Naive thymus-derived CD4-positive, alpha-beta T cell (primary cell): ENCODE measurements at regions of chr11 and their contacts with region 1.

Region 1: DNA sequence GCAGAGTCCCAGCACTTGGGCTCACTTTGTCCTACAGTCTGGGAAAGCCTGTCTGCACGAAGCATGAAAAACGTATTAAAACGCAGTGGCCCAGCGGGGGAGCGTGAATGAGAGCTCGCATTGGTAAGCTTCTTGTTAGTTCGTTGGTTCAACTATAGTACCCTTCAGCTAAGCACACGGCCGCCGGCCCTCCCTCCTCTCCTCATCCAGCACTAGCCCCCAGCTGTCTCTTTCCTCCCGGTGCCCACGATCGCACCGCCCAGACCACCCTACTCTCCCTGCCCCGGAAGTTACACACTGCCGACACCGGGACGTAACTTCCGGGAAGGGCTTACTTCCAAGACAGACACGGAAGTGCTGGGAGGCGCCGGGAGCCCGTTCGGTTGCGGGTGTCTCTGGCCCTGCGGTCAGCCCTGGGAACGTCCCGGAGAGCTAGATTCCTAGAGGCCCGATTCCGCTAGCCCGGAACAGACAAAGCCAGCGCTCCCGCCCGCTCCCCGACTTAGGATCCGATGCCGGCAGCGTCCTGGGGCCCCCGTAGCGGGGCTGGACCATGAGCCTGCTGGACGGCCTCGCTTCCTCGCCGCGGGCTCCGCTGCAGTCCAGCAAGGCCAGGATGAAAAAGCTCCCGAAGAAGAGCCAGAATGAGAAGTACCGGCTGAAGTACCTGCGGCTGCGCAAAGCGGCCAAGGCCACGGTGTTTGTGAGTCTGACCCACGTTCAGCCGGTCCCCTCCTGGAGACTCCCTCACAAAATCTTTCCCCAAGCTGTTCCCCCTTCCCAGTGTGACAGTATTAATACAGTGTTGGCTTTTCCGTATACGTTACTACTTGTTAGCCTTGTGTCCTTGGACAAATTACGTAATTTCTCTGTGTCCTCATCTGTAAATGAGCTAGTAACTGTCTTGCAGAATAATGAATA is at the start of gene TBRG1:
- DNase-seq: peak; percentile 58 to 87 (median 81)
- ATAC-seq: peak; percentile 96
- H3K4me3 ChIP-seq: peak within 1 kb of the TSS; percentile 75
- H3K4me3 Mint-ChIP-seq: peak within 1 kb of the TSS; percentile 89 to 100 (median 98)
- H3K27ac ChIP-seq: peak within 1 kb of the TSS; percentile 91
- H3K27ac Mint-ChIP-seq: peak within 1 kb of the TSS; percentile 91 to 100 (median 98)
- H3K4me1 ChIP-seq: peaks cover 7 to 12% of the 10 kb centered on the region in 2 donors
- H3K4me1 Mint-ChIP-seq: peaks cover 21 to 52% (median 46%) of the 10 kb centered on the region in 7 donors
- H3K27me3 ChIP-seq: no peaks in the 10 kb centered on the region
- H3K27me3 Mint-ChIP-seq: peaks cover 0 to 23% (median 7%) of the 10 kb centered on the region in 5 donors
- total RNA-seq, gene TBRG1: 35.5 to 78.6 (median 63.9) TPM

Region 2: GRCh38 chr11:123741159-123742028 is 881.4 kb before region 1 on chr11 and contains the start of gene ZNF202:
- CTCF ChIA-PET with region 1: no interaction called
- POLR2A ChIA-PET with region 1: no interaction called
- intact Hi-C with region 1: loop called (anchors 1 to 2 kb)
- DNase-seq: peak; percentile 83 to 92 (median 89)
- ATAC-seq: peak; percentile 98
- H3K4me3 ChIP-seq: peak within 1 kb of the TSS; percentile 92
- H3K4me3 Mint-ChIP-seq: peak within 1 kb of the TSS; percentile 85 to 100 (median 96)
- H3K27ac ChIP-seq: peak within 1 kb of the TSS; percentile 85
- H3K27ac Mint-ChIP-seq: peak within 1 kb of the TSS; percentile 91 to 98 (median 95)
- H3K4me1 ChIP-seq: peaks cover 19% of the 10 kb centered on the region in 2 donors
- H3K4me1 Mint-ChIP-seq: peaks cover 30 to 57% (median 46%) of the 10 kb centered on the region in 7 donors
- H3K27me3 ChIP-seq: no peaks in the 10 kb centered on the region
- H3K27me3 Mint-ChIP-seq: peaks cover 0 to 24% (median 6%) of the 10 kb centered on the region in 5 donors
- total RNA-seq, gene ZNF202: 13.0 to 27.0 (median 18.6) TPM

Region 3: GRCh38 chr11:124114942-124115781 is 507.6 kb before region 1 on chr11 and contains the start of gene VWA5A:
- CTCF ChIA-PET with region 1: no interaction called
- POLR2A ChIA-PET with region 1: no interaction called
- intact Hi-C with region 1: loop called in 1 of 2 experiments (anchors 1 kb)
- DNase-seq: peak; percentile 22 to 73 (median 59)
- ATAC-seq: peak; percentile 97
- H3K4me3 ChIP-seq: peak within 1 kb of the TSS; percentile 89
- H3K4me3 Mint-ChIP-seq: peak within 1 kb of the TSS; percentile 86 to 100 (median 90)
- H3K27ac ChIP-seq: peak within 1 kb of the TSS; percentile 41
- H3K27ac Mint-ChIP-seq: peak within 1 kb of the TSS; percentile 66 to 95 (median 83)
- H3K4me1 ChIP-seq: peaks cover 7 to 8% of the 10 kb centered on the region in 2 donors
- H3K4me1 Mint-ChIP-seq: peaks cover 13 to 37% (median 22%) of the 10 kb centered on the region in 7 donors
- H3K27me3 ChIP-seq: no peaks in the 10 kb centered on the region
- H3K27me3 Mint-ChIP-seq: peaks cover 0 to 15% (median 12%) of the 10 kb centered on the region in 5 donors
- total RNA-seq, gene VWA5A: 5.2 to 10.2 (median 8.3) TPM

Region 4: DNA sequence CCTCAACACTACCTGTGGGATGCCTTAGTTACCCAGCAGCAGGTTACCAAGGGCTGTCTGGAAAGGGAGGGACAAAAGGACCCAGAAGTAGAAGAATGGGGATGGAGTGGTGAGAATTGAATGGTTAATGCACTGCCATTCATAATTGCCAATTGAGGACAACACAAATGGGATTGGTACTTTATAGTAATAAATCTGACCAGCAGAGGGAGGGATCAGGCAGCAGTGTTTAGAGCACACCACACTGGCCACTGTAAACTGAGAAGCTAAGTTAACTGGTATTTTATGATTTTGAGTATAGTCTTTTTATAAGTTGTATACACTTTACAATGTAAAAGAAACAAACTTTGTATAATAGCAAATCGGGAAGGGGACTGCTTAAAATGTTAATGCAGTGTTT is 10.6 kb after region 1 on chr11:
- CTCF ChIA-PET with region 1: no interaction called
- POLR2A ChIA-PET with region 1: interaction called, 15 read pairs
- intact Hi-C with region 1: no loop called
- DNase-seq: no peak
- ATAC-seq: peak; percentile 41
- H3K4me3 ChIP-seq: no peak overlapping the region
- H3K4me3 Mint-ChIP-seq: no peak overlapping the region
- H3K27ac ChIP-seq: no peak overlapping the region
- H3K27ac Mint-ChIP-seq: peak overlapping the region in 1 of 9 donors; percentile 70
- H3K4me1 ChIP-seq: no peaks in the 10 kb centered on the region
- H3K4me1 Mint-ChIP-seq: peaks cover 0 to 6% (median 3%) of the 10 kb centered on the region in 7 donors
- H3K27me3 ChIP-seq: no peaks in the 10 kb centered on the region
- H3K27me3 Mint-ChIP-seq: no peaks in the 10 kb centered on the region

Region 5: DNA sequence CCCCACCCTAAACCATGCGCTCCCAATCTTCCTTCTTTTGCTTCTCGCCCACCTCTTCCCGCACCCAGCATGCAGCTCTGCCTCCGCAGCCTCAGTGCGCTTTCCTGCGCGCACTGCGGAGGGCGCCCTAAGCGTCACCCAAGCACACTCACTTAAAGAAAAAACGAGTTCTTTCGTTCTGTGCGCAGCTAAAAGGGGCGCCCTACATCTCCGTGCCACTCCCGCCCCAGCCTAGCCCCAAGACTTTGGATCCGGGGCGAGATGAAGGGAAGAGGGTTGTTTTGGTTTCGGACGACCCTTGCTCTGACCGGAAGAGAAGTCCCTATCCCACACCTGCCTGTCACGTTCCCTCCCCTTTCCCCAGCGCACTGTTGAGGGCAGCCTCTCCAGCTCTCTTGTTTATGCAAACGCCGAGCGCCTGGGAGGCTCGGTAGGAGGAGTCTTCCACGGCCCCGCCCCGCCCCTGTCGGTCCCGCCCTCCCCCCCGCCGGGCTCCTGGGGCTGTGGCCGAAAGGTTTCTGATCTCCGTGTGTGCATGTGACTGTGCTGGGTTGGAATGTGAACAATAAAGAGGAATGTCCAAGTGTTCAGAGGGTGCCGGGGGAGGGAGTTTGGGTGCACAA is 123.9 kb after region 1 on chr11:
- CTCF ChIA-PET with region 1: no interaction called
- POLR2A ChIA-PET with region 1: interaction called, 7 read pairs
- intact Hi-C with region 1: loop called (anchors 2 kb)
- DNase-seq: peak; percentile 66 to 88 (median 85)
- ATAC-seq: peak; percentile 93
- H3K4me3 ChIP-seq: peak overlapping the region; percentile 99
- H3K4me3 Mint-ChIP-seq: peak overlapping the region; percentile 91 to 100 (median 98)
- H3K27ac ChIP-seq: peak overlapping the region; percentile 72
- H3K27ac Mint-ChIP-seq: peak overlapping the region; percentile 91 to 98 (median 96)
- H3K4me1 ChIP-seq: peaks cover 0 to 3% of the 10 kb centered on the region in 2 donors
- H3K4me1 Mint-ChIP-seq: peaks cover 4 to 37% (median 19%) of the 10 kb centered on the region in 7 donors
- H3K27me3 ChIP-seq: no peaks in the 10 kb centered on the region
- H3K27me3 Mint-ChIP-seq: peaks cover 0 to 22% (median 0%) of the 10 kb centered on the region in 5 donors

Region 6: GRCh38 chr11:124758317-124759203 is 135.8 kb after region 1 on chr11:
- CTCF ChIA-PET with region 1: no interaction called
- POLR2A ChIA-PET with region 1: no interaction called
- intact Hi-C with region 1: no loop called
- DNase-seq: peak in 8 of 9 donors; percentile 61 to 73 (median 66)
- ATAC-seq: peak; percentile 78
- H3K4me3 ChIP-seq: peak overlapping the region; percentile 27
- H3K4me3 Mint-ChIP-seq: peak overlapping the region; percentile 52 to 98 (median 76)
- H3K27ac ChIP-seq: no peak overlapping the region
- H3K27ac Mint-ChIP-seq: peak overlapping the region in 2 of 9 donors; percentile 38 to 41
- H3K4me1 ChIP-seq: peaks cover 8 to 31% of the 10 kb centered on the region in 2 donors
- H3K4me1 Mint-ChIP-seq: peaks cover 6 to 40% (median 24%) of the 10 kb centered on the region in 7 donors
- H3K27me3 ChIP-seq: peaks cover 7 to 16% of the 10 kb centered on the region in 2 donors
- H3K27me3 Mint-ChIP-seq: peaks cover 36 to 60% (median 53%) of the 10 kb centered on the region in 5 donors

Region 7: GRCh38 chr11:124800226-124800929 is 177.6 kb after region 1 on chr11 and contains the start of gene MSANTD2:
- CTCF ChIA-PET with region 1: interaction called, 3 read pairs
- POLR2A ChIA-PET with region 1: interaction called, 10 read pairs
- intact Hi-C with region 1: loop called (anchors 1 kb)
- DNase-seq: peak; percentile 65 to 89 (median 73)
- ATAC-seq: peak; percentile 92
- H3K4me3 ChIP-seq: peak within 1 kb of the TSS; percentile 71
- H3K4me3 Mint-ChIP-seq: peak within 1 kb of the TSS; percentile 88 to 97 (median 96)
- H3K27ac ChIP-seq: peak within 1 kb of the TSS; percentile 93
- H3K27ac Mint-ChIP-seq: peak within 1 kb of the TSS; percentile 88 to 98 (median 94)
- H3K4me1 ChIP-seq: peaks cover 8 to 14% of the 10 kb centered on the region in 2 donors
- H3K4me1 Mint-ChIP-seq: peaks cover 13 to 38% (median 32%) of the 10 kb centered on the region in 7 donors
- H3K27me3 ChIP-seq: no peaks in the 10 kb centered on the region
- H3K27me3 Mint-ChIP-seq: peaks cover 0 to 24% (median 0%) of the 10 kb centered on the region in 5 donors
- total RNA-seq, gene MSANTD2: 9.1 to 29.5 (median 14.4) TPM

Region 8: DNA sequence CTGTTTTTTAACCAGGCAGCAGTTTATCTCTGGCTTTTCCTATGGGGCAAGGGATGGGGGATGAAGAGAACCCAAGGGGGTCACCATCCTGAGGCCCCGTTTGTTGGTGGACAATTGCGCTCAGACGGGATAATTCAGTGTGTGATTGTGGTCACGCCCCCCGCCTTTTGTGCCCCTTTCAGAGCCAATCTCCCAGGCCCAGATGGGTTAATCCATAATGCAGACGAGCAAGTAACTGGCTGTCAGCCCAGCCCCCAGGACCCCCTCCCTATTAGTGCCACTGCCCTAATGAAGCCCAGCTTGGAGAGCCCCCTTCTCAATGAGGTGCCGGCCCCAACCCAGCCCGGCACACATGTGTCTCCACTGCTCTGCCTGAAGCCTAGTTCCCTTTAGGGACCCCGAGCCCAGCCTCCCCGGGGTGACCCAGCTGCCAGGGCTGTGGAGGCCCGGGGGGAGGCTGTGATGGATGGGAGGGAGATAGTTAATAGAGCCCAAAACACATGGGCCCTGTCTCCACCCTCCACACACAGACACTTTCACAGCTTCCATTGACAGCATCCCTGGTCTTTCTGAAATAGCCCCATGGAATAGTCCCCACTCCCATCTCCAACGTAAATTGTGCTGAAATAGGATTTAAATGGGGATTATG is 223.4 kb after region 1 on chr11:
- CTCF ChIA-PET with region 1: no interaction called
- POLR2A ChIA-PET with region 1: no interaction called
- intact Hi-C with region 1: no loop called
- DNase-seq: no peak
- ATAC-seq: no peak
- H3K4me3 ChIP-seq: no peak overlapping the region
- H3K4me3 Mint-ChIP-seq: no peak overlapping the region
- H3K27ac ChIP-seq: no peak overlapping the region
- H3K27ac Mint-ChIP-seq: no peak overlapping the region
- H3K4me1 ChIP-seq: no peaks in the 10 kb centered on the region
- H3K4me1 Mint-ChIP-seq: peaks cover 0 to 14% (median 2%) of the 10 kb centered on the region in 7 donors
- H3K27me3 ChIP-seq: peaks cover 15 to 16% of the 10 kb centered on the region in 2 donors
- H3K27me3 Mint-ChIP-seq: peaks cover 87 to 99% (median 90%) of the 10 kb centered on the region in 5 donors